Right cardiac atrium (tissue), 5 donors: ENCODE measurements at regions of chr15 and their contacts with region 1.

Region 1: DNA sequence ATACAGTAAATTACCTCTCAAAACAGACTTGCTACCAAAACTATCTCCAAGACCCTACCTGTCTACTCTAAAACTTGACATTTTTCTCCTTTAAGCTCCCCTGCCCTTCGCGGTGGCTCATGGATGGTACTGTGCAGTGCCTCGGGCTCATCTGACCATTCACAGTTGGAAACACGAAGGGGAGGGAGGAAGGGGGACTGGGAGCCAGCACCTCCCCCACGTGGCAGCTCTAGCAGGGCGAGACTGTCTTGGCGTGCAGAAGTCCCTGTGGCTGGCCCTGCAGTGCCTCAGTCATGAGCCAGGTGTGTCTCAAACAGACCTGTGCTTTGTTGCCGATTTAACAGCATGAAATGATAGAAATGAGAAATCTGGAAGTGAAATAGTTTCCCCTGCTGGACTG is 372.0 kb downstream of the GABRG3 start:
- DNase-seq: no peak
- ATAC-seq: no peak
- H3K4me3 ChIP-seq: no peak overlapping the region
- H3K27ac ChIP-seq: no peak overlapping the region
- H3K4me1 ChIP-seq: no peaks in the 10 kb centered on the region
- H3K27me3 ChIP-seq: no peaks in the 10 kb centered on the region

Region 2: DNA sequence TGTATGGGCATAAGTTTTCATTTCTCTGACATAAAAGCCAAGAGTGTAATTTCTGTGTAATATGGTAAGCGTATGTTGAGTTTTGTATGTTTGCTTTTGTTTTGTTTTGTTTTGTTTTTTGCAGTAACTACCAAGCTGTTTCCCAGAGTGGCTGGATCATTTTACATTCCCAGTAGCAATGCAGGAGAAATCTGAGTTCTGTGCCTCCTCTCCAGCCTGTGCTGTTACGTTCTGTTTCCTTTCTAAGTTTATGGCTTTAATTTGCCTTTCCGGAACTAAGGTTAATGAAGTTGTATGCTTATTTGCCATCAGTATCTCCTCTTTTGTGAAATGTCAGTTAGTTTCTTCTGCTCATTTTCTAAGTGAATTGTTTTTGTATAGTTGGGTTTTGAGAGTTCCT is 64.2 kb before region 1 on chr15:
- intact Hi-C with region 1: loop called in 1 of 4 experiments (anchors 10 kb)
- DNase-seq: no peak
- ATAC-seq: no peak
- H3K4me3 ChIP-seq: no peak overlapping the region
- H3K27ac ChIP-seq: no peak overlapping the region
- H3K4me1 ChIP-seq: no peaks in the 10 kb centered on the region
- H3K27me3 ChIP-seq: no peaks in the 10 kb centered on the region